Heart right ventricle (tissue), 16 donors: ENCODE measurements at regions of chr10 and their contacts with region 1.

Region 1: GRCh38 chr10:117167789-117168674 is 29.3 kb upstream of the KCNK18 start:
- DNase-seq: peak; percentile 13 to 66
- ATAC-seq: peak; percentile 81 to 92 (median 86)
- H3K4me3 ChIP-seq: peak overlapping the region in 5 of 10 donors; percentile 2 to 31 (median 21)
- H3K27ac ChIP-seq: no peak overlapping the region
- H3K4me1 ChIP-seq: peaks cover 0 to 43% (median 21%) of the 10 kb centered on the region in 9 donors
- H3K27me3 ChIP-seq: peaks cover 48 to 100% (median 100%) of the 10 kb centered on the region in 7 donors
- CTCF ChIP-seq: peak; percentile 53 to 96 (median 78)

Region 2: DNA sequence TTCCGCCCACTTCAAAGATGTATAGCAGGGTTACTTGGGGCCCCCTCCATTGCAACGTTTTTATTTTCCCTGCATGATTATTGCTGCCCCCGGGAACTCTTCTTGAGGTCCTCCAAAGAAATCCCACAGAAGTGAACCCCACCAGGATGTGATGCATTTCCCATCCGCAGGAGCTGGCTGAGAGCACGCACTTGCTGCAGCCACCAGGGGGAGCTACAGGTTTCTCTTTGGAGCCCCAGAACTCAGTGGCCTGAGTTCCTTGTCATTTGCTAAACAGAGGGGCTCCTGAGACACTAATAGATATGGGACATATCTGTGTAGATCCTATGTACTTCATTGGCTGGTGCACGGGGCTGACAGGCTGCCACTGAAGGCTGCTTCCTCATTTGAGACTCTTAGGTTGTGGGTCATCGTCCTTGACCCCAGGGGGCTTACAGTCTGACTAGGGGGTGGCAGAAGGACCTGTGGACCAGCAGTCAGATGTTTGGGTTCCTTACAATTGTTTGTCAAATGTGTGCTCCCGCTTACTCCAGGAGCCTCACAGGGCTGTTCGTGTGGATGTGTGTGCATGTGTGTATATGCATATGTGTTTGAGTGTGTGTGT is 371.0 kb before region 1 on chr10:
- intact Hi-C with region 1: loop called in 4 of 10 experiments (anchors 2 to 5 kb)
- DNase-seq: peak; percentile 60 to 67
- ATAC-seq: peak; percentile 63 to 91 (median 82)
- H3K4me3 ChIP-seq: no peak overlapping the region
- H3K27ac ChIP-seq: no peak overlapping the region
- H3K4me1 ChIP-seq: no peaks in the 10 kb centered on the region
- H3K27me3 ChIP-seq: peaks cover 0 to 37% (median 12%) of the 10 kb centered on the region in 7 donors
- CTCF ChIP-seq: peak; percentile 78 to 92 (median 88)